GM12878 (cell line): ENCODE measurements at regions of chr10 and their contacts with region 1.

Region 1: GRCh38 chr10:1454428-1454827 is 282.9 kb downstream of the ADARB2 start:
- DNase-seq: peak; percentile 63
- ATAC-seq: peak; percentile 98
- H3K4me3 ChIP-seq: no peak overlapping the region
- H3K27ac ChIP-seq: peak overlapping the region; percentile 11; the same call in 1 of the 2 replicates
- H3K4me1 ChIP-seq: no peaks in the 10 kb centered on the region
- H3K27me3 ChIP-seq: no peaks in the 10 kb centered on the region
- CTCF ChIP-seq: no peak
- EP300 ChIP-seq: peak; percentile 66 to 74
- POLR2A ChIP-seq: no peak
- RAD21 ChIP-seq: no peak

Region 2: DNA sequence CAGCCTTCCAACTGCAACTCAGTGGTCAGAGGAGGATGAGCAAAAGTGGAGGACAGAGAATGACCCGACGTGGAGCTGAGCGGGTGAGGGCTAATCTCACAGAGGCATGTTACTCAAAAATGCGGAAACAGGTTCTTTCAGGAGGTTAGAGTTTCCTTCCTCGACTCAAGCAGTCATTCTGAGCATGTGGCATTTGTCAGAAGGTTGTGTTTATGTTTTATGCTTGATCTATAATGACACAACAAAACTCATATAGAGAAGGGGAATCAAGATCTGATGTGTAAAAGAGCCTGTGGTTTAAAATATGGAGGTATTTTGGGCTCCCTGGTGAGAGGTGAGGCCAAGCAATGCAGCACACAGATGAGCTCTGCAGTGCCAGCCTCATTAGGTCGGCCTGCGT is 28.5 kb before region 1 on chr10:
- CTCF ChIA-PET with region 1: interaction called, 7 read pairs
- POLR2A ChIA-PET with region 1: interaction called, 5 read pairs
- RAD21 ChIA-PET with region 1: interaction called, 16 read pairs
- SMC1A ChIA-PET with region 1: interaction called, 35 read pairs
- in situ Hi-C with region 1: no loop called
- intact Hi-C with region 1: no loop called
- DNase-seq: peak; percentile 50
- ATAC-seq: peak; percentile 88
- H3K4me3 ChIP-seq: no peak overlapping the region
- H3K27ac ChIP-seq: no peak overlapping the region
- H3K4me1 ChIP-seq: peaks cover 16% of the 10 kb centered on the region
- H3K27me3 ChIP-seq: no peaks in the 10 kb centered on the region
- CTCF ChIP-seq: no peak
- EP300 ChIP-seq: peak in 1 of 2 experiments; percentile 46; a peak in 2 of 4 replicates
- POLR2A ChIP-seq: no peak
- RAD21 ChIP-seq: no peak

Region 3: GRCh38 chr10:1440897-1441296 is 13.5 kb before region 1 on chr10:
- CTCF ChIA-PET with region 1: interaction called, 5 read pairs
- POLR2A ChIA-PET with region 1: interaction called, 4 read pairs
- RAD21 ChIA-PET with region 1: interaction called, 3 read pairs
- SMC1A ChIA-PET with region 1: interaction called, 22 read pairs
- in situ Hi-C with region 1: no loop called
- intact Hi-C with region 1: no loop called
- DNase-seq: no peak
- ATAC-seq: no peak
- H3K4me3 ChIP-seq: no peak overlapping the region
- H3K27ac ChIP-seq: no peak overlapping the region
- H3K4me1 ChIP-seq: no peaks in the 10 kb centered on the region
- H3K27me3 ChIP-seq: no peaks in the 10 kb centered on the region
- CTCF ChIP-seq: no peak
- EP300 ChIP-seq: no peak
- POLR2A ChIP-seq: no peak
- RAD21 ChIP-seq: no peak

Region 4: GRCh38 chr10:1465418-1465976 is 11.1 kb after region 1 on chr10:
- CTCF ChIA-PET with region 1: interaction called, 4 read pairs
- POLR2A ChIA-PET with region 1: interaction called, 12 read pairs
- RAD21 ChIA-PET with region 1: interaction called, 12 read pairs
- SMC1A ChIA-PET with region 1: interaction called, 23 read pairs
- in situ Hi-C with region 1: no loop called
- intact Hi-C with region 1: no loop called
- DNase-seq: peak; percentile 27
- ATAC-seq: peak; percentile 94
- H3K4me3 ChIP-seq: peak overlapping the region; percentile 54
- H3K27ac ChIP-seq: no peak overlapping the region
- H3K4me1 ChIP-seq: no peaks in the 10 kb centered on the region; the same call in 1 of the 2 replicates
- H3K27me3 ChIP-seq: no peaks in the 10 kb centered on the region
- CTCF ChIP-seq: no peak
- EP300 ChIP-seq: peak in 1 of 2 experiments; percentile 43; a peak in 1 of 4 replicates
- POLR2A ChIP-seq: no peak
- RAD21 ChIP-seq: no peak

Region 5: GRCh38 chr10:1488969-1489548 is 34.6 kb after region 1 on chr10:
- CTCF ChIA-PET with region 1: interaction called, 3 read pairs
- POLR2A ChIA-PET with region 1: no interaction called
- RAD21 ChIA-PET with region 1: interaction called, 3 read pairs
- SMC1A ChIA-PET with region 1: interaction called, 16 read pairs
- in situ Hi-C with region 1: no loop called
- intact Hi-C with region 1: no loop called
- DNase-seq: peak; percentile 65
- ATAC-seq: peak; percentile 96
- H3K4me3 ChIP-seq: peak overlapping the region; percentile 23; the same call in 1 of the 2 replicates
- H3K27ac ChIP-seq: peak overlapping the region; percentile 32; the same call in 1 of the 2 replicates
- H3K4me1 ChIP-seq: peaks cover 8% of the 10 kb centered on the region
- H3K27me3 ChIP-seq: no peaks in the 10 kb centered on the region
- CTCF ChIP-seq: no peak; a peak in 1 of 6 replicates
- EP300 ChIP-seq: 0 out of 4 replicates have a peak, but pooled peaks of 1 of the 2 experiments have one; percentile 2
- POLR2A ChIP-seq: peak; percentile 57
- RAD21 ChIP-seq: no peak